Gastrocnemius medialis (tissue), 4 donors: ENCODE measurements at regions of chr2 and their contacts with region 1.

Region 1: GRCh38 chr2:113784823-113785744 is 28.6 kb upstream of the SLC35F5 start:
- DNase-seq: peak; percentile 37 to 51
- ATAC-seq: peak; percentile 96 to 99
- H3K4me3 ChIP-seq: peak overlapping the region in 3 of 4 donors; percentile 9 to 23 (median 14)
- H3K27ac ChIP-seq: peak overlapping the region; percentile 76 to 87 (median 80)
- H3K4me1 ChIP-seq: peaks cover 12 to 18% of the 10 kb centered on the region in 2 donors
- H3K27me3 ChIP-seq: no peaks in the 10 kb centered on the region
- CTCF ChIP-seq: no peak
- POLR2A ChIP-seq: no peak

Region 2: GRCh38 chr2:113770929-113771328 is 14.2 kb before region 1 on chr2:
- in situ Hi-C with region 1: no loop called
- intact Hi-C with region 1: loop called (anchors 2 kb)
- DNase-seq: no peak
- ATAC-seq: no peak
- H3K4me3 ChIP-seq: no peak overlapping the region
- H3K27ac ChIP-seq: no peak overlapping the region
- H3K4me1 ChIP-seq: no peaks in the 10 kb centered on the region
- H3K27me3 ChIP-seq: no peaks in the 10 kb centered on the region
- CTCF ChIP-seq: no peak
- POLR2A ChIP-seq: no peak